Activated naive CD8-positive, alpha-beta T cell treated with anti-CD3 and anti-CD28 coated beads, Interleukin-2, amount 10 ng/mL, durations not matched to agents 7 days and 5 days (primary cell): ENCODE measurements at regions of chr1 and their contacts with region 1.

Region 1: GRCh38 chr1:239719642-239720258 is 333.4 kb downstream of the CHRM3 start:
- DNase-seq: peak; percentile 34
- ATAC-seq: peak; percentile 78
- H3K4me3 Mint-ChIP-seq: no peak overlapping the region
- H3K27ac Mint-ChIP-seq: peak overlapping the region; percentile 94
- H3K4me1 Mint-ChIP-seq: peaks cover 34% of the 10 kb centered on the region
- H3K27me3 Mint-ChIP-seq: no peaks in the 10 kb centered on the region

Region 2: DNA sequence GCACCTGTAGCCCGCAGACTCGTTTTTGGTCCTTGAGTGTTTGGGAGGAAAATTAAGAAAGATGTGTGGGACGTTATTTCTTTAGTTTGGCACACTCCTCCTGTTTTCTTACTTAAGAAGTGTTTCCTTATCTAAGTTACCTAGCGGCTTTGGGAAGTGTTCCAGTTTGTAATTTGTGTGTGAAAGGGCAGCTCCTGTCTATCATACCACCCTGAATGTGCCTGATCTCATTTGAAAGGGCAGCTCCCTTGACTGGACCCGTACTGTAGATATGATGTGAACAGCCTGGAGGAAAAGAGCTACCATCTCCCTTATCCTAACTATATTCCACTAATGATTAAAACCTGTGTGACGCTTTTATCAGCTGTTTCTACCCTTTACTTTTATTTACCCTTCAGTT is 19.1 kb before region 1 on chr1:
- POLR2A ChIA-PET with region 1: interaction called, 22 read pairs
- DNase-seq: no peak
- ATAC-seq: no peak
- H3K4me3 Mint-ChIP-seq: no peak overlapping the region
- H3K27ac Mint-ChIP-seq: no peak overlapping the region
- H3K4me1 Mint-ChIP-seq: peaks cover 1% of the 10 kb centered on the region
- H3K27me3 Mint-ChIP-seq: no peaks in the 10 kb centered on the region